Heart left ventricle (tissue), 16 donors: ENCODE measurements at regions of chr3 and their contacts with region 1.

Region 1: GRCh38 chr3:197354319-197355001 is 56.0 kb upstream of the DLG1 start:
- DNase-seq: peak; percentile 52 to 81 (median 71)
- ATAC-seq: peak in 3 of 4 donors; percentile 4 to 41 (median 20)
- H3K4me3 ChIP-seq: peak overlapping the region in 5 of 12 donors; percentile 12 to 45 (median 41)
- H3K27ac ChIP-seq: peak overlapping the region in 10 of 12 donors; percentile 7 to 78 (median 71)
- H3K4me1 ChIP-seq: peaks cover 0 to 50% (median 24%) of the 10 kb centered on the region in 12 donors
- H3K27me3 ChIP-seq: no peaks in the 10 kb centered on the region
- CTCF ChIP-seq: no peak
- POLR2A ChIP-seq: no peak

Region 2: GRCh38 chr3:197298341-197298857 is 56.1 kb before region 1 on chr3 and contains the start of gene DLG1:
- intact Hi-C with region 1: loop called in 5 of 10 experiments (anchors 2 to 5 kb)
- DNase-seq: peak; percentile 88 to 92 (median 91)
- ATAC-seq: peak; percentile 88 to 93 (median 89)
- H3K4me3 ChIP-seq: peak within 1 kb of the TSS; percentile 51 to 100 (median 92)
- H3K27ac ChIP-seq: peak within 1 kb of the TSS; percentile 86 to 97 (median 92)
- H3K4me1 ChIP-seq: peaks cover 0 to 36% (median 13%) of the 10 kb centered on the region in 12 donors
- H3K27me3 ChIP-seq: no peaks in the 10 kb centered on the region
- CTCF ChIP-seq: no peak
- POLR2A ChIP-seq: no peak
- total RNA-seq, gene DLG1: 37.1 to 151 (median 63.6) TPM

Region 3: GRCh38 chr3:197394464-197395321 is 40.2 kb after region 1 on chr3:
- intact Hi-C with region 1: loop called in 4 of 10 experiments (anchors 1 to 5 kb)
- DNase-seq: peak; percentile 67 to 89 (median 72)
- ATAC-seq: peak; percentile 85 to 94 (median 94)
- H3K4me3 ChIP-seq: no peak overlapping the region
- H3K27ac ChIP-seq: peak overlapping the region; percentile 11 to 88 (median 67)
- H3K4me1 ChIP-seq: peaks cover 0 to 27% (median 11%) of the 10 kb centered on the region in 12 donors
- H3K27me3 ChIP-seq: no peaks in the 10 kb centered on the region
- CTCF ChIP-seq: no peak
- POLR2A ChIP-seq: no peak

Region 4: GRCh38 chr3:197430934-197431333 is 76.5 kb after region 1 on chr3:
- intact Hi-C with region 1: loop called in 1 of 10 experiments (anchors 10 kb)
- DNase-seq: no peak
- ATAC-seq: peak; percentile 28 to 73 (median 56)
- H3K4me3 ChIP-seq: no peak overlapping the region
- H3K27ac ChIP-seq: peak overlapping the region in 11 of 12 donors; percentile 19 to 85 (median 51)
- H3K4me1 ChIP-seq: peaks cover 0 to 40% (median 25%) of the 10 kb centered on the region in 12 donors
- H3K27me3 ChIP-seq: no peaks in the 10 kb centered on the region
- CTCF ChIP-seq: no peak
- POLR2A ChIP-seq: no peak